Activated CD4-positive, alpha-beta T cell treated with anti-CD3 and anti-CD28 coated beads for 36 hours (primary cell): ENCODE measurements at regions of chrX and their contacts with region 1.

Region 1: DNA sequence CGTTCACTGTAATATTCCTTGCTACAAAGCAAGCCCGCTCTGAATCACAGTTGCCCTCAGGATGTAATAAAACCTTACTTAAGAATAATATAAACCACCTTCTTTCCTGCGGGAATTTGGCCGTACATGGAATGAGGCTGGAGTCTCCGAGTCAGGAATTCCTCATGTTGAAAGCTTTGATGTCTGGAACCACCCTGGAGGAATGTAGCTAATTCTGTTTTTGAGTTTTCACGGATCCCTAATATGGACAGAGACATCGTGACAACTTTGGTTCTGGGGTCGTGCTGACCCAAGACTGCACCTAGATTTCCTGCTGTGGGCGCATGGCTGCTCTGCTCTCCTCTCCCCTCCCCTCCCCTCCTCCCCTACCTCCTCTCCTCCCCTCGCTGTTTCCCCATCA is 58.4 kb downstream of the CRLF2 start:
- DNase-seq: no peak
- ATAC-seq: no peak
- H3K4me3 Mint-ChIP-seq: no peak overlapping the region
- H3K27ac Mint-ChIP-seq: no peak overlapping the region
- H3K4me1 Mint-ChIP-seq: no peaks in the 10 kb centered on the region
- H3K27me3 Mint-ChIP-seq: peaks cover 4% of the 10 kb centered on the region

Region 2: DNA sequence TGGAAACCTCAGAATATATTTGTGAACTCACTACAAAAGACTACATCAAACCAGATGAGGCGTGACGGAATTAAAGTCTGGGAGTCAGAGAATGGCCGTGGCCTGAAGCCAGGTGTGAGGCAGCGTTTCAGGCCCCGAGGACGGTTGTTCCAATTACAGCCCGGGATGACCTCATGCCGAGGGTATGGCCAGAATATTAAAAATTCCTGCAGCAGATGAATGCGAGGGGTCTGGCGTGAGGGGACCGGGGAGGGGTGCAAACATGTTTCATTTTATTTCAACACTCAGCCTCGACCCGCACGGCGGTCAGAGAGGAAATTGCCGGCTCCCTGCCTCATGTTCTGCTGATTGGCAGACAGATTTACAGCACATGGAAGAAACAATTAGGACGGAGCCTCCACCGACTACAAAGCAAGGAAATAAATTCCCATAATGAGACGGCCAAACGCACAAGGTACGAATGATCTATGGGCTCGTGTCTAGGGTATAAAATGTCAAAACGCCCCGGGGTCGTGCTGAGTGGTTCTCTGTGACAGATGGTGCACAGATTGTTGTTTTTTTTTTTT is 233.7 kb before region 1 on chrX:
- CTCF ChIA-PET with region 1: no interaction called
- POLR2A ChIA-PET with region 1: no interaction called
- intact Hi-C with region 1: loop called in 1 of 2 experiments (anchors 10 kb)
- DNase-seq: no peak
- ATAC-seq: no peak
- H3K4me3 Mint-ChIP-seq: no peak overlapping the region
- H3K27ac Mint-ChIP-seq: no peak overlapping the region
- H3K4me1 Mint-ChIP-seq: no peaks in the 10 kb centered on the region
- H3K27me3 Mint-ChIP-seq: no peaks in the 10 kb centered on the region